PC-3 (cell line): ENCODE measurements at regions of chr2 and their contacts with region 1.

Region 1: GRCh38 chr2:235583144-235583543 is 89.3 kb downstream of the AGAP1 start:
- DNase-seq: no peak
- ATAC-seq: no peak
- H3K4me3 ChIP-seq: no peak overlapping the region
- H3K27ac ChIP-seq: no peak overlapping the region
- H3K4me1 ChIP-seq: no peaks in the 10 kb centered on the region
- H3K27me3 ChIP-seq: no peaks in the 10 kb centered on the region
- CTCF ChIP-seq: no peak

Region 2: GRCh38 chr2:235358981-235359471 is 224.1 kb before region 1 on chr2:
- CTCF ChIA-PET with region 1: no interaction called
- POLR2A ChIA-PET with region 1: interaction called, 11 read pairs
- intact Hi-C with region 1: no loop called
- DNase-seq: peak; percentile 64
- ATAC-seq: peak; percentile 31
- H3K4me3 ChIP-seq: no peak overlapping the region
- H3K27ac ChIP-seq: peak overlapping the region; percentile 28; the same call in 1 of the 2 replicates
- H3K4me1 ChIP-seq: peaks cover 14% of the 10 kb centered on the region
- H3K27me3 ChIP-seq: no peaks in the 10 kb centered on the region
- CTCF ChIP-seq: no peak